PC-9 (cell line): ENCODE measurements at regions of chr5 and their contacts with region 1.

Region 1: GRCh38 chr5:57277085-57277484 is 103.2 kb downstream of the GPBP1 start:
- DNase-seq: no peak
- H3K4me3 ChIP-seq: no peak overlapping the region
- H3K27ac ChIP-seq: no peak overlapping the region
- H3K4me1 ChIP-seq: no peaks in the 10 kb centered on the region
- H3K27me3 ChIP-seq: no peaks in the 10 kb centered on the region
- CTCF ChIP-seq: peak; percentile 65

Region 2: DNA sequence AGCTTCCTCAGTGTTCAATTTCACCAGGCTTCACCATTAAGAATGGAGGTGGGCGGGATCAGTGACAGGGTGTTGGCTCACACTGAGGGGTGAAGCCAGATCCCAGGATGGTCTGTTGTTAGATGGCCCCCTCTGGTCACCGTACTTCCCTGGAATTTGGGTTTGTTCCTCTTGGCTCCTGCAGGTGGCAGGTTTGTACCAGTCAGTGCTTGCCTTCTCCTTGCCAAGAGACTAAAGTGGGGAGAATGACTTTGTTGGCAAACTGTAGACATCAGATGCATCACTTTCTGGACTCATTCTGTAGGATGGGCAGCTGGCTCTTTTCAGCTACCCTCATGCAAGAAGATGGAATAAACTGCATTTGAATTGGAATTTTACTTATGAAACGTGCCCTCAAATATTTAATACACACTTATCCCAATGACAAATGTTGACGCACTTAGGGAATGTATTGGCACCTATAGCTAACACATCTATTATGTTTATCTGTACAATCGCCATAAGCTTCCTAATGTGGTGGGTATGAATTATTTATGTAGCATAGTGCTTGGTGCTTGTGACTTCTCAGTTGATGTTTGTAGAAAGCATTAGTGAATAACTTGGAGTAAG is 1012.6 kb before region 1 on chr5:
- CTCF ChIA-PET with region 1: no interaction called
- POLR2A ChIA-PET with region 1: no interaction called
- intact Hi-C with region 1: loop called (anchors 1 kb)
- DNase-seq: no peak
- H3K4me3 ChIP-seq: no peak overlapping the region
- H3K27ac ChIP-seq: no peak overlapping the region
- H3K4me1 ChIP-seq: peaks cover 2% of the 10 kb centered on the region
- H3K27me3 ChIP-seq: no peaks in the 10 kb centered on the region
- CTCF ChIP-seq: peak; percentile 64

Region 3: DNA sequence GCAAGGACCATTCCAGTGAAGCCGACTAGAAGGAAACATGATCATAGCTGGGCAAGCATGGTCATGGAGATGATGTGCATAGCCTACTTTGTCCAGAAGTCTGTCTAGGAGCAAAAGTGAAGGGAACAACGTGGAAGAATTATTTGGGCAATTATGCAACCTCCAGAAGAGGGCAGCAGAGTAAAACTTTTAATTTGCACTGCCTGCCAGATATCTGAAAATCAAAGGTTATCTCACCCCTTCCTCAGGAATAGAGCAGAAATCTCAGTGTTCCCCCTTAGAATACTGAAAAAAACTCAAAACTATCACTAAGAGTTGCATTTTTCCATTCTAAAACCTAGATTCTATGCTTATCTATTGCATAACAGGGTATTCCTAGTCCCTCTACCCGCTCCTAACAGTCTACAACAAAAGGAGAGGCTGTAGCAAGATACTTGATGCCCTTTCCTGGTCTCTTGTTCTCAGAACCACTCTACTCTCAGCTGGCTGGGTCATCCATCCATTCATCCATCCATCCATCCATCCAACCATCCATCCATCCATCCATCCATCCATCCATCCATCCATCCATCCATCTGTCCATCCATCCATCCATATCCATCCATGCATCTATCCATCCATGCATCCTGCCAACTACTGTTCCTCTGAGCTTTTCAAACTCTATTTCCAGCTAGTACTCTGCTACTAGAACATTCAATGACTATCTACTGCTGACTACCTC is 376.1 kb before region 1 on chr5:
- CTCF ChIA-PET with region 1: interaction called, 4 read pairs
- POLR2A ChIA-PET with region 1: no interaction called
- intact Hi-C with region 1: loop called (anchors 5 kb)
- DNase-seq: peak in 1 of 2 experiments; percentile 31
- H3K4me3 ChIP-seq: no peak overlapping the region
- H3K27ac ChIP-seq: no peak overlapping the region
- H3K4me1 ChIP-seq: 0 out of 2 replicates have a peak, but pooled peaks cover 4% of the 10 kb centered on the region
- H3K27me3 ChIP-seq: no peaks in the 10 kb centered on the region
- CTCF ChIP-seq: peak; percentile 79

Region 4: GRCh38 chr5:57137401-57137800 is 139.7 kb before region 1 on chr5:
- CTCF ChIA-PET with region 1: no interaction called
- POLR2A ChIA-PET with region 1: no interaction called
- intact Hi-C with region 1: loop called (anchors 5 kb)
- DNase-seq: no peak
- H3K4me3 ChIP-seq: no peak overlapping the region
- H3K27ac ChIP-seq: no peak overlapping the region
- H3K4me1 ChIP-seq: no peaks in the 10 kb centered on the region
- H3K27me3 ChIP-seq: no peaks in the 10 kb centered on the region
- CTCF ChIP-seq: no peak

Region 5: DNA sequence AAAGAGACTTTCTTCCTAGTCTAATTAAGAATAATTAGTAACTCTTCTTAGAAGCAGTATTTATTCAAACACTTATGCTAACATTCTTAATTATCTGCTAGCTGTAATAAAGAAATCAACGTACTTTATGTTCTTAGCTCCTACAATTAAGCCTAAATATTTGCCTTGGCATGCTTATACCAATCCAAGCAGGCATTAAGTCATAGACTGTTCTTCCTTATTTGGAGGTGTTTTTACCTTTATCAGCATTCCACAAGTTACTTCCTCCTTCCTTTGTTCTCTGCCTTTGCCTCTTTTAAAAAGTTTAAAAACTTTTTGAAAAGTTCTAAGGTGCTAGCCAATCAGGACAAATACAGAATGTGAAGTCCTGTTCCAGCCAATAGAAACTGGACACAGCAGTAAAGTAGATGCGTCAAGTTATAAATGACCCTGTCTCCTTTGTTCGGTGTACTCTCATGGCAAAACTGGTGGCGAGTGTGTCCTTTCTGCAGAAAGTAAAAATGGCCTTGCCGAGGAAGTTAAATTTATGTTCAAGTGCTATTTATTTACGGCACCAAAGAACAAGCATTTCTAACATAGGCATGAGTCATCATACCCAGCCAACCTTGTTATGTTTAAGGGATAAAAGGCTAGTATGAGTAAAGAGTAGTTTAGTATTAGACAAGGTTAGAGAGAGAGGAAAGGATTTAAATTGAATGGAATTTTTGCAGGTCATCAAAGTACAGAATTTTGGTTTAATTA is 44.6 kb before region 1 on chr5:
- CTCF ChIA-PET with region 1: no interaction called
- POLR2A ChIA-PET with region 1: no interaction called
- intact Hi-C with region 1: no loop called
- DNase-seq: no peak
- H3K4me3 ChIP-seq: no peak overlapping the region
- H3K27ac ChIP-seq: no peak overlapping the region
- H3K4me1 ChIP-seq: no peaks in the 10 kb centered on the region
- H3K27me3 ChIP-seq: no peaks in the 10 kb centered on the region
- CTCF ChIP-seq: no peak

Region 6: DNA sequence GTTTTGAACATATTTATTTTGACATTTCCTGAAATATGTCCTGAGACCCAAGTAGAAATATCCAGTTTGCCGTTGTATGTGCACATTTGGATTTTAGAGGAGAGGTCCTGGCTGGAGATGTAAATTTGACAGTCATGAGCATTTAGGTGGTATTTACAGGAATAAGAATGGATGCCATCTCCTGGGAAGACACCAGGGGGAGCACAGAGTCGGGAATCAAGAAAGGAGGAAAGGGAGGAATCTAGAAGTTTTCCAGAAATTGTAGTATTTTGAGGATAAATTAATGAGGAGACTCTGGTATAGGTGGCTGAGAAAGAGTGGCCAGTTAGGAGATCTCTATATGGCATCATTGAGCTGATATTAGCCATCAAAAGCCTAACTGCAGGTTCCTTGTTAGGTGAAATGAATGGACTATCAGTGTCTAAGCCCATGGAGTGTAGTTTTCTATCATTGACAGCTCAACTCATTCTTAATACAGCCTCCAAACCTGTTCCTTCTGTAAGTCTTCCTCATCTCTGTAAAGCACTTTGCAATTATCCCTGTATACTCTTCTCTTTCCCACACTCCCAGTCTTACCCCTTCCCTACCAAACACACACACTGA is 1221.4 kb after region 1 on chr5:
- CTCF ChIA-PET with region 1: no interaction called
- POLR2A ChIA-PET with region 1: interaction called, 19 read pairs
- intact Hi-C with region 1: no loop called
- DNase-seq: peak in 1 of 2 experiments; percentile 9
- H3K4me3 ChIP-seq: no peak overlapping the region
- H3K27ac ChIP-seq: no peak overlapping the region
- H3K4me1 ChIP-seq: no peaks in the 10 kb centered on the region
- H3K27me3 ChIP-seq: no peaks in the 10 kb centered on the region
- CTCF ChIP-seq: peak; percentile 83